Gastrocnemius medialis (tissue), 4 donors: ENCODE measurements at regions of chr13 and their contacts with region 1.

Region 1: DNA sequence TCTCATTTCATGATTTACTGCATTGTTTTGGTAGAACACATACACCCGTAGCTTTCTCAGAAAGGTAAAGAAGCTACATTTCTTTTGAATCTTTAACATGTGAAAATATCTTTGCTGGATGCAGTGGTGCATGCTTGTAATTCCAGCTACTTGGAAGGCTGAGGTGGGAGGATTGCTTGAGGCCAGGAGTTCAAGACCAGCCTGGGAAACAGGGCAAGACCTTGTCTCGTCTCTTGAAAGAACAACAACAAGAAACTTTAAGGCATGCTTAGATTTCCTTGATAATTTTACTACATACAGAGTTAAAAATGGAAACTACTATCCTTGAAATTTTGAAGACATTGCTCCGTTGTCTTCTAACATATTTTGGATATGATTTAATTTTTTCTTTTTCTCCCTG is 7.7 kb downstream of the RNF113B start:
- DNase-seq: no peak
- ATAC-seq: no peak
- H3K4me3 ChIP-seq: no peak overlapping the region
- H3K27ac ChIP-seq: no peak overlapping the region
- H3K4me1 ChIP-seq: peaks cover 31% of the 10 kb centered on the region in 2 donors
- H3K27me3 ChIP-seq: no peaks in the 10 kb centered on the region
- CTCF ChIP-seq: no peak
- POLR2A ChIP-seq: no peak

Region 2: DNA sequence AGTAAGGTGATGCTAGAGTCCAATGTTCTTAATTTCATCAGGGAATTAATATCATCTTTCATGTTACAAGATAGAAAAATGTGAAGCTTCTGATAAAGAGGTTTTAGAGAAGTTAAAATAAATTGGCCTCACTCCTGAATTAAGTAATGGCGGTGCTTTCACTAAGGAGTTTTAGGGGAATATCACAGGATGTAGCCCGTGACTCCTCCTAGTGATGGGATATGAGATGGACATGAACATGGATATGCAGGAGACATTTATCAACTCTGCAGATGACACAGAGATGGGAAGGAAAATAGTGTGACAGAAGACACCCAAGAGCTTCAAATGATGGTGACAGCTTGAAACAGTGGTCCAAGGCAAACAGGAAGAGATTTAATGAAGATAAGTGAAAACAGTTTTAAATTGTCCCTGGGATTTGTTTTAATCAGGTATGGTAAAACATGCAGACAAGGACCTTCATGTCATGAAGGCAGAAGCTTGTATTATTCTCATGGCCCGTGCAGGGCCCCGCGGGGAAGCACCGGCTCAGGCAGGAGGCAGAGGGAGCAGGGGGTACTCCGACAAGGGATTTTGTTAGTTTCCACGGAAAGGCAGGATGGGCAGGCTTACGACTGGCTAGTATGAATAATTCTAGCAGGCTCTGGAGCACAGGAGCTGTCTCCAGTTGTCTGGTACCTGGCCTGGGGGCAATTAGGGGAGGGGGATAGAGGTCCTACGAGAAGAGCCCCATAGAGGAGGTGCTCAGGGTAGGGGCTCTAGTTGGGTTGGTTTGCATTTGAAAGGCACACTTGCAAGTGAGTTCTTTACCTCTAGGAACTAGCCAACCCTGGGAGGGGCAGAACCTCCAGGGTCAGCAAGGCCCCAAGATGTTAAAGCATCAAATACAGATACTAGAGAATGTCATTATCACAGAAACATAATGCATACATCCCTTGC is 65.1 kb before region 1 on chr13:
- in situ Hi-C with region 1: loop called in 1 of 4 experiments (anchors 10 kb)
- intact Hi-C with region 1: no loop called
- DNase-seq: no peak
- ATAC-seq: no peak
- H3K4me3 ChIP-seq: no peak overlapping the region
- H3K27ac ChIP-seq: no peak overlapping the region
- H3K4me1 ChIP-seq: no peaks in the 10 kb centered on the region
- H3K27me3 ChIP-seq: no peaks in the 10 kb centered on the region
- CTCF ChIP-seq: no peak
- POLR2A ChIP-seq: no peak